ENCODE measurements at regions of chr5 and their contacts with region 1.

Region 1: DNA sequence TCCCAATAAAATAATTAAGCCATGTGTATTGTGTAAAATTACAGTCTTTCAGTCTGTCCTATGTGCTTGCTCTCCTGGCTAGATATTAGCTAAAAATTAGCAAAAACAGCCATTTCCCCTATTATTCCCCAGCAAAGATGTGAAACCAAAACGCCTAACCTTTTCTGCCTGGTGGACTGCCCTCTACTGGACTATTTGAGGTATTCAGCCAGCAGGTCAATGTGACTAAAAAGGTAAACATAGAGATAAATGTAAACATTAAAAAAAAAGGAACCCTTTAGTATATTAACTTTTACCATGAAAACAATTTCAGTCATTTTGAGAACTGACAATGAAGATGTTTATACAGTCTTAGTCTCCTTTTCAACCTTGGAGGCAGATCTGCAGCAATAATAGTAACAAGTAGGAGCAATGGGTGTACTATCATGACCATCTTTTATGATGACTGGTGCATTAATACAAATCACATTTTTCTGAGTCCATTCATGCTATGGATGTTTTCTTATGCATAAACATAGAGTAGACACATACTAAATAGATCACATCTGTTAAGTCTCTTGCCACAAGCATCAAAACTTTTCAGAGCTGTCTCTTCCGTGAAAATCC is 10.1 kb downstream of the ATG12 start:
- DNase-seq: peak in 5 of 9 donors; percentile 17 to 36 (median 30)
- ATAC-seq: peak; percentile 87
- H3K4me3 ChIP-seq: no peak overlapping the region
- H3K4me3 Mint-ChIP-seq: no peak overlapping the region
- H3K27ac ChIP-seq: no peak overlapping the region
- H3K27ac Mint-ChIP-seq: peak overlapping the region in 4 of 9 donors; percentile 0 to 77 (median 8)
- H3K4me1 ChIP-seq: no peaks in the 10 kb centered on the region
- H3K4me1 Mint-ChIP-seq: peaks cover 5 to 29% (median 18%) of the 10 kb centered on the region in 7 donors
- H3K27me3 ChIP-seq: no peaks in the 10 kb centered on the region
- H3K27me3 Mint-ChIP-seq: peaks cover 0 to 1% (median 0%) of the 10 kb centered on the region in 5 donors

Region 2: DNA sequence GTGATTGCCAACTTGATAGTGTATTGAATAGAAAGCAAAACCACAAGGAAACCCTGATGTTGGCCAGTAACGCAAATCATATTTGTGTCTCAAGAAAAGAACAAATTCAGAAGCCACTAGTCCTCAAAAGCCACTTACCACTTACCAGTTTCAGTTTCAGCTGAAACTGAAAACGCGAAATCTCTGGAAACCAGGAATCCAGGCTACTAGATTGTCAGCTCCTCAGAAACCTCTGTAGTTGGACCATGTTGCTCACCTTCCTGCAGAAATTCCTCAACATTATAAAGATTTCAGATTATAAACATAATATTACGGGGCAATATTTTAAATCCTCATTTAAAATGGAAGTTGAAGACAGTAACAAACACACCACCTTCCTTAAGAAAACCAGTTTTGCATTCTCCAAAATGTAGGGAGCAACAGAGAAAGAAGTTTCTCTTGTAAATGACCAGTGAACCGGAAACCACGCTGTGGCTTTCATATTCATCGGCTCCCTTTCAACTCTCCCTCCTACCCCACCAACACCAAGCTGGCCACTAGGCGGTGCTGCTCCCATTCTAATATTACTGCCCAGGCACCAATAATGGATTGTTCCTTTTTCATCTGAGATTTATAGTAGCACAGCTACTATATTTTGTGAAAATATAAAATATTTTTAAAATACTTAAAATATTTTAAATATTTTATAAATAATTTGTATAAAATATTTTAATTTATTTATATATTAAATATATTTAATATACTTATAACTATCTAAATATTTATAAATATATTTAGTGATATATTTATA is 196.7 kb before region 1 on chr5:
- CTCF ChIA-PET with region 1: interaction called, 4 read pairs
- POLR2A ChIA-PET with region 1: no interaction called
- intact Hi-C with region 1: loop called (anchors 1 to 2 kb)
- DNase-seq: peak; percentile 59 to 75 (median 67)
- ATAC-seq: peak; percentile 97
- H3K4me3 ChIP-seq: peak overlapping the region; percentile 18
- H3K4me3 Mint-ChIP-seq: peak overlapping the region; percentile 59 to 87 (median 80)
- H3K27ac ChIP-seq: no peak overlapping the region
- H3K27ac Mint-ChIP-seq: peak overlapping the region in 6 of 9 donors; percentile 6 to 67 (median 43)
- H3K4me1 ChIP-seq: no peaks in the 10 kb centered on the region
- H3K4me1 Mint-ChIP-seq: peaks cover 0 to 44% (median 7%) of the 10 kb centered on the region in 7 donors
- H3K27me3 ChIP-seq: no peaks in the 10 kb centered on the region
- H3K27me3 Mint-ChIP-seq: peaks cover 0 to 66% (median 0%) of the 10 kb centered on the region in 5 donors

Region 3: DNA sequence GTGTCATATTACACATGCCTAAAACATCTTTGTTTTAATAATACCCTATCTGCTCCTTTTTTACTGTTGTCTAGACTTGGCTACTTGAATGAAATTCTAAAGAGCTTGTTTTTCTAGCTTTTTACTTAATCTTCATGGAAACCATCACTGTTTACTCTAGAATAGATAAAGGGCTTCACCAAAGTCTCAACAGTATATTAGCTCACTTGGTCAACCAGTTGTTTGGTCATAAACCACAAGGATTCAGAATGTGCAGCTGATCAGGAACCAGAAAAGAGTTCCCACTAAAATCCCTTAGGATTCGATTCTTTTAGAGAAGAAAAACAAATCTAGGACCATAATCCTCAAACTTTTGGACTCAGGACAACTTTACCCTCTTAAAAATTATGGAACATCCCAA is 52.8 kb before region 1 on chr5:
- CTCF ChIA-PET with region 1: no interaction called
- POLR2A ChIA-PET with region 1: no interaction called
- intact Hi-C with region 1: no loop called
- DNase-seq: no peak
- ATAC-seq: no peak
- H3K4me3 ChIP-seq: no peak overlapping the region
- H3K4me3 Mint-ChIP-seq: no peak overlapping the region
- H3K27ac ChIP-seq: no peak overlapping the region
- H3K27ac Mint-ChIP-seq: no peak overlapping the region
- H3K4me1 ChIP-seq: no peaks in the 10 kb centered on the region
- H3K4me1 Mint-ChIP-seq: no peaks in the 10 kb centered on the region
- H3K27me3 ChIP-seq: peaks cover 0 to 3% of the 10 kb centered on the region in 2 donors
- H3K27me3 Mint-ChIP-seq: peaks cover 11 to 32% (median 25%) of the 10 kb centered on the region in 5 donors

Region 4: DNA sequence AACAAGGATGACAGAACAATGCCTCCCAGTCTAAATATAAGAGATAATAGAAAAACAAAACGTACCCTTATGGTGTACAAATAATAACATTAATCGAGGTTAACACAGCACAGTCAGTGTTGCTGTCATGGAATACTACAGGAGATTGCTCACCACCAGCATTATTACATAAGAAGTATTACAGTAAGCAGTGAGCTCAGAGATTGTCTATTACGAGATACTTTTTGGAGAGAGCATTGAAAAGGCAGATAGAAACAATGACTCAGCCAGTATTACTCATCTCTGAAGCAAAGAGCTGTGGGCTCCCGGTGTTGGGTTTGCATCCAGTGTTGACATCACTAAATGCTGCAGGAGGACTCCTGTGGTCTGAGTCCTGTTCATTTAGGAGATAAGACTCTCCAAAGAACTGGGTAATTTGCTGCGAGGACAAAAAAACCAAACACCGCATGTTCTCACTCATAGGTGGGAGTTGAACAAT is 935.2 kb after region 1 on chr5:
- CTCF ChIA-PET with region 1: no interaction called
- POLR2A ChIA-PET with region 1: no interaction called
- intact Hi-C with region 1: no loop called
- DNase-seq: no peak
- ATAC-seq: no peak
- H3K4me3 ChIP-seq: no peak overlapping the region
- H3K4me3 Mint-ChIP-seq: no peak overlapping the region
- H3K27ac ChIP-seq: no peak overlapping the region
- H3K27ac Mint-ChIP-seq: no peak overlapping the region
- H3K4me1 ChIP-seq: no peaks in the 10 kb centered on the region
- H3K4me1 Mint-ChIP-seq: no peaks in the 10 kb centered on the region
- H3K27me3 ChIP-seq: no peaks in the 10 kb centered on the region
- H3K27me3 Mint-ChIP-seq: peaks cover 0 to 9% (median 0%) of the 10 kb centered on the region in 5 donors